B cell (primary cell): ENCODE measurements at regions of chr16 and their contacts with region 1.

Region 1: GRCh38 chr16:67461600-67462592 is 19.1 kb downstream of the ATP6V0D1 start:
- DNase-seq: no peak
- ATAC-seq: no peak
- H3K4me3 ChIP-seq: no peak overlapping the region
- H3K4me3 Mint-ChIP-seq: no peak overlapping the region
- H3K27ac ChIP-seq: no peak overlapping the region
- H3K27ac Mint-ChIP-seq: no peak overlapping the region
- H3K4me1 ChIP-seq: peaks cover 7 to 23% of the 10 kb centered on the region in 2 donors
- H3K4me1 Mint-ChIP-seq: peaks cover 31% of the 10 kb centered on the region
- H3K27me3 ChIP-seq: no peaks in the 10 kb centered on the region
- H3K27me3 Mint-ChIP-seq: no peaks in the 10 kb centered on the region
- CTCF ChIP-seq: no peak

Region 2: GRCh38 chr16:67447508-67448076 is 14.3 kb before region 1 on chr16:
- CTCF ChIA-PET with region 1: interaction called, 18 read pairs
- POLR2A ChIA-PET with region 1: no interaction called
- intact Hi-C with region 1: no loop called
- DNase-seq: peak; percentile 55
- ATAC-seq: peak; percentile 59
- H3K4me3 ChIP-seq: no peak overlapping the region
- H3K4me3 Mint-ChIP-seq: no peak overlapping the region
- H3K27ac ChIP-seq: no peak overlapping the region
- H3K27ac Mint-ChIP-seq: no peak overlapping the region
- H3K4me1 ChIP-seq: no peaks in the 10 kb centered on the region
- H3K4me1 Mint-ChIP-seq: no peaks in the 10 kb centered on the region
- H3K27me3 ChIP-seq: no peaks in the 10 kb centered on the region
- H3K27me3 Mint-ChIP-seq: no peaks in the 10 kb centered on the region
- CTCF ChIP-seq: peak; percentile 39

Region 3: DNA sequence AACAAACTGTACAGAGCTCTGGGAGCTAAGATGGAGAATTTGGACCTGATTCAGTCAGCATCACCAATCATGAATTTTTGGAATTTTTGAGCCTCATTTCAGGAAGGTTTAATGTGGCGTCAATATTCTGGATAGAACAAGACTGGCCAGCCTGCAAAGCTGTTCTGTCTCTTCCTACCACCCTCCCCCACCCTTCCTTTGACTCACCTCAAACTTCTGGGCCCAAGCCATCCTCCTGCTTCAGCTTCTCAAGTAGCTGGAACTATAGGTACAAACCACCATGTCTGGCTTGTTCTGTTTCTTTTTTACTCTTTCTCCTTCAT is 133.1 kb after region 1 on chr16:
- CTCF ChIA-PET with region 1: no interaction called
- POLR2A ChIA-PET with region 1: no interaction called
- intact Hi-C with region 1: no loop called
- DNase-seq: no peak
- ATAC-seq: no peak
- H3K4me3 ChIP-seq: no peak overlapping the region
- H3K4me3 Mint-ChIP-seq: no peak overlapping the region
- H3K27ac ChIP-seq: peak overlapping the region in 1 of 2 donors; percentile 12
- H3K27ac Mint-ChIP-seq: no peak overlapping the region
- H3K4me1 ChIP-seq: no peaks in the 10 kb centered on the region
- H3K4me1 Mint-ChIP-seq: peaks cover 27% of the 10 kb centered on the region
- H3K27me3 ChIP-seq: no peaks in the 10 kb centered on the region
- H3K27me3 Mint-ChIP-seq: no peaks in the 10 kb centered on the region
- CTCF ChIP-seq: no peak

Region 4: GRCh38 chr16:68116256-68116867 is 654.5 kb after region 1 on chr16:
- CTCF ChIA-PET with region 1: no interaction called
- POLR2A ChIA-PET with region 1: no interaction called
- intact Hi-C with region 1: no loop called
- DNase-seq: peak; percentile 54
- ATAC-seq: peak; percentile 31
- H3K4me3 ChIP-seq: no peak overlapping the region
- H3K4me3 Mint-ChIP-seq: no peak overlapping the region
- H3K27ac ChIP-seq: peak overlapping the region in 1 of 2 donors; percentile 73
- H3K27ac Mint-ChIP-seq: peak overlapping the region; percentile 67
- H3K4me1 ChIP-seq: peaks cover 64 to 73% of the 10 kb centered on the region in 2 donors
- H3K4me1 Mint-ChIP-seq: peaks cover 74% of the 10 kb centered on the region
- H3K27me3 ChIP-seq: no peaks in the 10 kb centered on the region
- H3K27me3 Mint-ChIP-seq: no peaks in the 10 kb centered on the region
- CTCF ChIP-seq: peak; percentile 77